Posterior vena cava (tissue), 2 donors: ENCODE measurements at regions of chr10 and their contacts with region 1.

Region 1: DNA sequence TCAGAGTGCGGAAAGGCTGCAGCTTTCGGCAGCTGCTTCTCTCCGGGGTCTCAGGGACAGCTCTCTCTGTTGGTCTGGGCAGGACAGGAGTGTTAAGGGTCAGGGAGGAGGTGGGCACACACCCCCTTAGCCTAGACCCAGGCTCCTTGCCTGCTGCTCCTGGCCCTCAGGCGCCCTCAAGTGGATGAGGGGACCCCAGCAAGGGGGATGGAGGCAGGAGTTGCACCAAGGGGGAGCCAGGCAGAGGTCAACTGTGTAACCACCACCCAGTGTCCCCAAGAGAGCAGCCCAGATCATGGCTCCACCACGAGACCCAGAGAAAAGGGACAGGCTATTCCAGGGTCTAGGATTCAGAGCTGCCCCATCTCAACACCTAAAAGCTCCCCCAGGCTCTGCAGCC is 26.9 kb downstream of the SPOCK2 start:
- DNase-seq: no peak

Region 2: GRCh38 chr10:72107325-72108003 is 46.0 kb after region 1 on chr10:
- intact Hi-C with region 1: no loop called
- DNase-seq: no peak

Region 3: GRCh38 chr10:73908853-73909538 is 1847.5 kb after region 1 on chr10:
- intact Hi-C with region 1: loop called in 1 of 2 experiments (anchors 5 kb)
- DNase-seq: no peak